Activated CD8-positive, alpha-beta T cell treated with anti-CD3 and anti-CD28 coated beads, Interleukin-2, amount 10 ng/mL, durations not matched to agents 7 days and 5 days (primary cell): ENCODE measurements at regions of chr5 and their contacts with region 1.

Region 1: GRCh38 chr5:137660349-137660817 is 75.5 kb downstream of the KLHL3 start:
- DNase-seq: peak; percentile 87
- ATAC-seq: peak; percentile 94
- H3K4me3 Mint-ChIP-seq: no peak overlapping the region
- H3K27ac Mint-ChIP-seq: no peak overlapping the region
- H3K4me1 Mint-ChIP-seq: peaks cover 21% of the 10 kb centered on the region
- H3K27me3 Mint-ChIP-seq: no peaks in the 10 kb centered on the region

Region 2: DNA sequence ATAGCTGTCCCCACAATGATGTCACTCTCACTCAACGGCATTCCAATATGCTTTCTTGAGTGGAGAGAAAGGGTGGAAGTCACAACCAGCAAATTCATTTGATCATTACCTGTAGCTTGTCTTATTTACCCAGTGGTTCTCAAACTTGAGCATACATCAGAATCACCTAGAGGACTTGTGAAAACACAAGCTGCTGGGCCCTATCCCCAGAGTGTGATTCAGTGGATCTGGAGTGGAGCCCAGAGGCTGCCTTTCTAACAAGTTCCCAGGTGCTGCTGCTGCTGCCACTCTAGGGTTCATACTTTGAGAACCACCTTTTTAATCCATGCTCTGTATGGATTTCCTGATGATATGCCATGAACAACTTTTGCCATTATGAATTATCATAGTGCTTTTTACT is 19.2 kb before region 1 on chr5:
- CTCF ChIA-PET with region 1: interaction called, 16 read pairs
- POLR2A ChIA-PET with region 1: no interaction called
- DNase-seq: no peak
- ATAC-seq: no peak
- H3K4me3 Mint-ChIP-seq: no peak overlapping the region
- H3K27ac Mint-ChIP-seq: no peak overlapping the region
- H3K4me1 Mint-ChIP-seq: no peaks in the 10 kb centered on the region
- H3K27me3 Mint-ChIP-seq: no peaks in the 10 kb centered on the region

Region 3: DNA sequence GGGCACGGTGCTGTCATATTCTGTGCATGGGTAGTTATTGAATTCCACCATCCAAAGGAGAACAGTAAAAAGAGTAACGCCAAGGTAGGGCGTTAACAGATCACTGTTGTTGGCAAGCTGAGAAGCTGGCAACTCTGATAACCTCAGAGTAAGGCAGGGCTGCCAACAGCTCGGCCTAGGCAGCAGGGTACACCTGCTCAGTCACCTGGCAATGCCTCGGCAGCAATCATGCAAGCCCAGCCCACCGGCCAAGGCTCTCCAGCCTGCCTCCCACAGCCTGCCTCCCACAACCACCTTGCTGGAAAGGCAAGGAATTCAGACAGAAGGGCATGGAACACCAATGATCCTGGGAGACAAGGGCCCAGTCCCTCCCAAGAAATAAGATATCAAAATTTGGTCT is 11.6 kb after region 1 on chr5:
- CTCF ChIA-PET with region 1: interaction called, 27 read pairs
- POLR2A ChIA-PET with region 1: no interaction called
- DNase-seq: no peak
- ATAC-seq: no peak
- H3K4me3 Mint-ChIP-seq: no peak overlapping the region
- H3K27ac Mint-ChIP-seq: no peak overlapping the region
- H3K4me1 Mint-ChIP-seq: peaks cover 7% of the 10 kb centered on the region
- H3K27me3 Mint-ChIP-seq: no peaks in the 10 kb centered on the region

Region 4: GRCh38 chr5:137695651-137696428 is 35.5 kb after region 1 on chr5:
- CTCF ChIA-PET with region 1: interaction called, 56 read pairs
- POLR2A ChIA-PET with region 1: interaction called, 3 read pairs
- DNase-seq: peak; percentile 40
- ATAC-seq: peak; percentile 56
- H3K4me3 Mint-ChIP-seq: peak overlapping the region; percentile 51
- H3K27ac Mint-ChIP-seq: peak overlapping the region; percentile 90
- H3K4me1 Mint-ChIP-seq: peaks cover 42% of the 10 kb centered on the region
- H3K27me3 Mint-ChIP-seq: no peaks in the 10 kb centered on the region

Region 5: DNA sequence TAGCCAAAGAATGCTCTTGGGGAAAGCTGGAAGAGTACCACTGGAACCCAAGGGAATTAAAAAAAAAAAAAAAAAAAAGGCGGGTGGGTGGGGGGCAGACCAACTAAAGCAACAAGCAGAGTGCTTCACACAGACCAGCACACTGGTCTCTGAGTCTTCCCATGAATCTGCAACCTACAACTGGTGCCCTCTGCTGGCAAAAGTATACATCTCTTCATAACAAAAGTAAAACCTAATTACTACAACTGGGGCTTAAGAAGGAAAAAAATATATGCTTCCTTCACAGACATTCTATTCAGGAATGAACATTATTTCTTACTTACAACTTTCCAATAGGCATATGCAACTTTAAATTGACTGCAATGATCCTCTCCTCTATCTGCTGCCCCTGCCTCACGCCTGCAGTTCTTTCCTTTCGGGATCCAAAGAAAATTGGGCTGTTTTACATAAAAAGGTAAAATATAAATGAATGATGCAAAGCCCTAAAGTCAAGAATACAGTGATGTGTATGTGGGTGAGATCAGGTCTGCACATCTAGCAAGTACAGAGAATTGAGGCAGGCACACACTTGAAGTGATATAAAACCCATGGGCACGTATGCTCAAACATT is 82.8 kb after region 1 on chr5:
- CTCF ChIA-PET with region 1: interaction called, 569 read pairs
- POLR2A ChIA-PET with region 1: interaction called, 15 read pairs
- DNase-seq: peak; percentile 82
- ATAC-seq: peak; percentile 88
- H3K4me3 Mint-ChIP-seq: no peak overlapping the region
- H3K27ac Mint-ChIP-seq: no peak overlapping the region
- H3K4me1 Mint-ChIP-seq: peaks cover 19% of the 10 kb centered on the region
- H3K27me3 Mint-ChIP-seq: no peaks in the 10 kb centered on the region

Region 6: GRCh38 chr5:137975208-137975607 is 314.8 kb after region 1 on chr5:
- CTCF ChIA-PET with region 1: no interaction called
- POLR2A ChIA-PET with region 1: no interaction called
- DNase-seq: no peak
- ATAC-seq: no peak
- H3K4me3 Mint-ChIP-seq: no peak overlapping the region
- H3K27ac Mint-ChIP-seq: no peak overlapping the region
- H3K4me1 Mint-ChIP-seq: no peaks in the 10 kb centered on the region
- H3K27me3 Mint-ChIP-seq: no peaks in the 10 kb centered on the region